PC-9 (cell line): ENCODE measurements at regions of chr1 and their contacts with region 1.

Region 1: GRCh38 chr1:211591980-211592493 is 13.1 kb upstream of the SLC30A1 start:
- DNase-seq: peak; percentile 31 to 54
- H3K4me3 ChIP-seq: no peak overlapping the region
- H3K27ac ChIP-seq: peak overlapping the region; percentile 60
- H3K4me1 ChIP-seq: peaks cover 34% of the 10 kb centered on the region
- H3K27me3 ChIP-seq: no peaks in the 10 kb centered on the region
- CTCF ChIP-seq: no peak

Region 2: GRCh38 chr1:211606914-211607755 is 15.1 kb after region 1 on chr1:
- CTCF ChIA-PET with region 1: no interaction called
- POLR2A ChIA-PET with region 1: no interaction called
- intact Hi-C with region 1: loop called (anchors 1 kb)
- DNase-seq: peak in 1 of 2 experiments; percentile 81
- H3K4me3 ChIP-seq: peak overlapping the region; percentile 62
- H3K27ac ChIP-seq: peak overlapping the region; percentile 84
- H3K4me1 ChIP-seq: peaks cover 47% of the 10 kb centered on the region
- H3K27me3 ChIP-seq: no peaks in the 10 kb centered on the region
- CTCF ChIP-seq: no peak

Region 3: DNA sequence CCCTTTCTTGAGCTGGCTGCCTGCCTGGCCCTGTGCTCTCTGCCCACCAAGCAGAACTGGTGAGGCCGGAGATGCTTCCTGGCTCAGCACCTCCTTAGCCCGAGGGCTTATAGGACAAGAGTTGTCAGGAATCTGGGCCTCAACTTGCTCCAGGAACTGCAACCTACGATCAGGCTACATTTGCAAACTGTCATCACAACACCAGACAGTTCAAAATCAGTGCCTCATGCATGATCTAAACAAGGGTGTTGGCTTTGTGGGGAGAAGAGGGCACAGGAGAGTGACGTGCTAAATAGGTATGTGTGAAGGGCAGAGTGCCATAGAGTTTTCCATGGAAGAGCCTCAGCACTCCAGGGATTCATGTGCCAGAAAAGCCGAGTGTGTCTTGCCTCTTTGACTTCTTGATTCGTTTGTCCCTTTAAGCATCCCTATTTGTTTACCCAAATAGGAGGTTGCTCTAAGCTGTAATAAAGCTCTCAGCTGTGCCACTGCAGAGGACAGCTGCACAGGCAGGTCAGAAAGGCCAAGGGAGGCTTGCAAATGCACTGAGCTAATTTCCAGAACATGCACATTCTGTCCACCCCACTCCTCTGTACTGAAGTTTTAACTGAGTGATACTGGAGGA is 113.5 kb after region 1 on chr1:
- CTCF ChIA-PET with region 1: no interaction called
- POLR2A ChIA-PET with region 1: no interaction called
- intact Hi-C with region 1: no loop called
- DNase-seq: peak; percentile 58 to 85
- H3K4me3 ChIP-seq: no peak overlapping the region
- H3K27ac ChIP-seq: peak overlapping the region; percentile 18; the same call in 1 of the 2 replicates
- H3K4me1 ChIP-seq: peaks cover 26% of the 10 kb centered on the region
- H3K27me3 ChIP-seq: no peaks in the 10 kb centered on the region
- CTCF ChIP-seq: no peak